AG04449 (cell line): ENCODE measurements at regions of chr10 and their contacts with region 1.

Region 1: GRCh38 chr10:57657164-57657765 is 610.4 kb downstream of the IPMK start:
- DNase-seq: no peak
- H3K4me3 ChIP-seq: no peak overlapping the region
- CTCF ChIP-seq: peak; percentile 69

Region 2: GRCh38 chr10:57673446-57673960 is 16.2 kb after region 1 on chr10:
- CTCF ChIA-PET with region 1: interaction called, 18 read pairs
- POLR2A ChIA-PET with region 1: no interaction called
- DNase-seq: no peak
- H3K4me3 ChIP-seq: no peak overlapping the region
- CTCF ChIP-seq: no peak